ENCODE measurements at regions of chr10 and their contacts with region 1.

Region 1: DNA sequence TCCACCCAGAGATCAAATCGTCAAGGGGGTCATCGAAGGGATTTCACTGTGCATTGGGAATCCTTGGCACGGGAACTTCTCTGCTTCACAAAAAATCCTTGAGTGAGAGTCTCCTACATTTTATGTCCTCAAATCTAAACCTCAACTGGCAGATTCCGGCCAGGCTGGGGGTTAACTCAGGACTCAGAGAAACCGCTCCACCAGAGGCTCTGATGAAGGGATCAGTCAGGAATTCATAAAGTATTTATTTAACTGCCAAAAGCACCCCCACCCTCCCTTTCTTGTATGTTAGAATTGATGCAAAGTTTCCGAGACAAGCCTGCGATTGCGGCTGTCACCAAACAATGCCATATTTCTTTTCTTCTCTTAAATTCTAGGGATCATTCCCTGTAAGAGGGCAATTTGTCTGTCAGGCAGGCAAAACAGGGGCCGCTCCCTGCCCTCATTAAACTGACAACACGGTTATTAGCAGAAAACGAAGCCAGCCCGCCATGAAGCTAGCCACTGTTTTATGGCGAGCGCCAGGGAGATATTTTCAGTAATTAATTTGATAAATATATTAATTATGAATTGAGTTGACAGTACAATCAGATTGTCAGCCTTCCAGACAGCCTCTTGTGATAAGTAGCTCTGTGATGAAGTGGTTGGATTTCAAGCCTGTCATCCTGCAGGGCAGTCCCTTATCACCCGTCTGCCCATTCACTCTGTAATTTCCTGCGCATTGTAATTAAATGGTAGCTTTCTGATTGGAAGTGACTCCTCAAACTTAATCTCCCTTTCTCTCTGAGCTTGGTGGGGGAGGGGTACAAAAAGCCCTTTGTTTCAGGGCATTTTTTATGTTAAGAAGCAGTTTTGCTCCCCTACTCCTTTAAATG is 153.0 kb upstream of the GPR26 start:
- DNase-seq: no peak
- H3K4me3 ChIP-seq: no peak overlapping the region
- H3K27ac ChIP-seq: no peak overlapping the region
- H3K4me1 ChIP-seq: peaks cover 2 to 11% (median 7%) of the 10 kb centered on the region in 4 experiments; a peak in 5 of 7 replicates
- H3K27me3 ChIP-seq: no peaks in the 10 kb centered on the region
- CTCF ChIP-seq: no peak
- EP300 ChIP-seq: no peak
- POLR2A ChIP-seq: no peak
- RAD21 ChIP-seq: no peak

Region 2: DNA sequence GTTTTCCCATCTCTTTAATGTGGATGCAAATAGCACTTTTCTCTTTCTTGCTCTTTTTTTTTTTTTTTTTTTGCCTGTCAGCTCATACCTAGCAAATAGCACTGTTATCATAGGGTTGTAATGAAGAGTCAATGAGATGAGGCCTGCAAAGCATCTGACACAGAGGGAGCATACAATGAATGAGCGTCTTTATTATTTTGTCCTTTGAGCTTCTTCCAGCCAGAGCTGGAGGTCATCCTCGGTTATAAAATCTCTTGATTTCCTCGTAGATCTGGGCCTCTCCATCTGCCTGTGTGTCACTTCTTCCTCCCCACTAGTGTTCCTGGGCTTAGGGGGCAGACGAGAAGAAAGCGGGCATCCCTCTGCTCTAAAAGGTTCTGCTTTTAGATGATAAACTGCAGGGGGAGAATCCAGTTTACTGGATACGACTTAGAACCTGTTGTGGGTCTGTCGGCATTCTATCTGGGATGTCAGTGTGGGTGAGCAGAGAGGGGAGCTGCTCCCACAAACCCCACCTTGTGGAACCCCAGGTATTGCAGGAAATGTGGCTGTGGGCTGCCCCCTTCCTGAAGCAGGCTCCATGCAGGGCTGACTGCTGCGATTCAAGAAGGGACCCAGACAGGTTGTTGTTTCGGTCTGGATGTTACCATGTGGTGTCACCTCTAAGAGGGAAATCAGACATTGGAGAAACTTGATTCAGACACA is 17.2 kb after region 1 on chr10:
- CTCF ChIA-PET with region 1: interaction called, 23 read pairs
- POLR2A ChIA-PET with region 1: interaction called, 5 read pairs
- DNase-seq: peak in 1 of 2 experiments; percentile 71
- H3K4me3 ChIP-seq: no peak overlapping the region
- H3K27ac ChIP-seq: no peak overlapping the region
- H3K4me1 ChIP-seq: 0 out of 7 replicates have a peak, but pooled peaks cover 0 to 2% (median 0%) of the 10 kb centered on the region in 4 experiments
- H3K27me3 ChIP-seq: no peaks in the 10 kb centered on the region; a peak in 1 of 7 replicates
- CTCF ChIP-seq: peak; percentile 60 to 82 (median 71)
- EP300 ChIP-seq: no peak
- POLR2A ChIP-seq: no peak
- RAD21 ChIP-seq: peak; percentile 54 to 66

Region 3: GRCh38 chr10:123607386-123607785 is 94.2 kb after region 1 on chr10:
- CTCF ChIA-PET with region 1: no interaction called
- POLR2A ChIA-PET with region 1: no interaction called
- DNase-seq: peak in 1 of 2 experiments; percentile 43
- H3K4me3 ChIP-seq: peak overlapping the region in 1 of 4 experiments; percentile 33; a peak in 2 of 8 replicates
- H3K27ac ChIP-seq: no peak overlapping the region; the same call in 1 of the 2 replicates
- H3K4me1 ChIP-seq: peaks cover 3 to 20% (median 10%) of the 10 kb centered on the region in 4 experiments; a peak in 5 of 7 replicates
- H3K27me3 ChIP-seq: no peaks in the 10 kb centered on the region
- CTCF ChIP-seq: no peak
- EP300 ChIP-seq: peak in 1 of 2 experiments; percentile 24; a peak in 1 of 3 replicates
- POLR2A ChIP-seq: no peak
- RAD21 ChIP-seq: peak in 1 of 2 experiments; percentile 7; a peak in 1 of 4 replicates